Endothelial cell of umbilical vein (primary cell): ENCODE measurements at regions of chr7 and their contacts with region 1.

Region 1: DNA sequence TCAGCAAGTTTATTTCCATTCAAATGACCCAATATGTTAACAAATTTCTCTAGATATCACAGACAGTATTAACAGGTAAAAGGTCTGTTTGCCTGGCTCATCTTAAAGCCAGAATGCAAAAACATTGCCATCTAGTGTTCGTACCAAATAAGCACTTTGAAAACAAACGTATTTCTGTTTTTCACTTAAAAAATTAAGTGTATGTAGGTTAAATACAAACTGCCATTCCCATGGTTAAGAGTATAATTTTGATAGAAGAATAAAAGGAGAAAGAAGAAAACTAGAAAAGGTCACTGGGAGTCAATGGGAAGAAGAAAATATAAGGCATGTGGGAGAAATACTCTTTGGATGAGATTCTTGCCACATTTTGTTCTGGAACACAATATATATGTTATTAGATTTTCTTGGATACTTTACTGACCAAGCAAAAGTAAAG is 51.0 kb downstream of the ORC5 start:
- DNase-seq: peak; percentile 44
- H3K4me3 ChIP-seq: no peak overlapping the region
- H3K27ac ChIP-seq: no peak overlapping the region
- H3K4me1 ChIP-seq: no peaks in the 10 kb centered on the region
- H3K27me3 ChIP-seq: no peaks in the 10 kb centered on the region
- CTCF ChIP-seq: peak; percentile 34 to 41
- POLR2A ChIP-seq: no peak

Region 2: GRCh38 chr7:103524042-103524907 is 632.6 kb before region 1 on chr7:
- CTCF ChIA-PET with region 1: interaction called, 5 read pairs
- POLR2A ChIA-PET with region 1: no interaction called
- dilution Hi-C with region 1: no loop called
- intact Hi-C with region 1: loop called (anchors 1 kb)
- DNase-seq: peak; percentile 35
- H3K4me3 ChIP-seq: no peak overlapping the region
- H3K27ac ChIP-seq: no peak overlapping the region
- H3K4me1 ChIP-seq: no peaks in the 10 kb centered on the region
- H3K27me3 ChIP-seq: peaks cover 0 to 5% of the 10 kb centered on the region in 2 experiments
- CTCF ChIP-seq: peak in 1 of 2 donors; percentile 12
- POLR2A ChIP-seq: no peak

Region 3: GRCh38 chr7:103660455-103661371 is 496.1 kb before region 1 on chr7:
- CTCF ChIA-PET with region 1: interaction called, 3 read pairs
- POLR2A ChIA-PET with region 1: no interaction called
- dilution Hi-C with region 1: no loop called
- intact Hi-C with region 1: loop called (anchors 2 kb)
- DNase-seq: peak; percentile 79
- H3K4me3 ChIP-seq: no peak overlapping the region
- H3K27ac ChIP-seq: no peak overlapping the region
- H3K4me1 ChIP-seq: peaks cover 3% of the 10 kb centered on the region
- H3K27me3 ChIP-seq: no peaks in the 10 kb centered on the region
- CTCF ChIP-seq: no peak
- POLR2A ChIP-seq: no peak

Region 4: GRCh38 chr7:103989785-103990767 is 166.8 kb before region 1 on chr7:
- CTCF ChIA-PET with region 1: no interaction called
- POLR2A ChIA-PET with region 1: no interaction called
- dilution Hi-C with region 1: no loop called
- intact Hi-C with region 1: loop called (anchors 5 kb)
- DNase-seq: peak; percentile 45
- H3K4me3 ChIP-seq: peak overlapping the region; percentile 41 to 80 (median 64)
- H3K27ac ChIP-seq: no peak overlapping the region
- H3K4me1 ChIP-seq: peaks cover 17% of the 10 kb centered on the region
- H3K27me3 ChIP-seq: peaks cover 30 to 62% of the 10 kb centered on the region in 2 experiments
- CTCF ChIP-seq: peak in 1 of 2 donors; percentile 20
- POLR2A ChIP-seq: no peak

Region 5: DNA sequence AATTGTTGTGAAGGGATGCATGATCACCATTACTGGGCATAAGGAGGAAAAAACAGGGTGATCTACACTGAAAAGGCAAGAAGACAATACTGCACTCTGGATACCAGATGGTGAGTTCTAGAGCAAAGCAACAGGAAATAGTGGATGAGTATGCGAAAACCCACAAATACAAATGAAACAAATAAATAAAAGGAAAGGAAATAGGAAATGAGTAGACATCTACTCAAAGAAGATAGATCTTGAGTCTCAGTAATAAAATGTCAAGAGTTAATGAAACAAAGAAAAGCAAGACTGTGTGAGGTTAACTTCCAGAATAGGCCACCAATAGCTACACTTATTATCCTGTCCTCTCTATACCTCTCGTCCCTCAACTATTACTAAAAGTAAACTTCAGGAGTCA is 39.3 kb after region 1 on chr7:
- CTCF ChIA-PET with region 1: no interaction called
- POLR2A ChIA-PET with region 1: no interaction called
- dilution Hi-C with region 1: no loop called
- intact Hi-C with region 1: no loop called
- DNase-seq: peak; percentile 74
- H3K4me3 ChIP-seq: no peak overlapping the region
- H3K27ac ChIP-seq: peak overlapping the region; percentile 69
- H3K4me1 ChIP-seq: peaks cover 19% of the 10 kb centered on the region
- H3K27me3 ChIP-seq: no peaks in the 10 kb centered on the region
- CTCF ChIP-seq: no peak
- POLR2A ChIP-seq: peak; percentile 28

Region 6: GRCh38 chr7:104207731-104208420 is 51.0 kb after region 1 on chr7 and contains the start of gene ORC5:
- CTCF ChIA-PET with region 1: no interaction called
- POLR2A ChIA-PET with region 1: no interaction called
- dilution Hi-C with region 1: no loop called
- intact Hi-C with region 1: no loop called
- DNase-seq: peak; percentile 85
- H3K4me3 ChIP-seq: peak within 1 kb of the TSS; percentile 75 to 98 (median 93)
- H3K27ac ChIP-seq: peak within 1 kb of the TSS; percentile 70
- H3K4me1 ChIP-seq: peaks cover 16% of the 10 kb centered on the region
- H3K27me3 ChIP-seq: no peaks in the 10 kb centered on the region
- CTCF ChIP-seq: no peak
- POLR2A ChIP-seq: peak; percentile 95
- total RNA-seq, gene ORC5: 18.6 and 21.1 TPM in 2 replicates